Sigmoid colon (tissue), 7 donors: ENCODE measurements at regions of chr3 and their contacts with region 1.

Region 1: DNA sequence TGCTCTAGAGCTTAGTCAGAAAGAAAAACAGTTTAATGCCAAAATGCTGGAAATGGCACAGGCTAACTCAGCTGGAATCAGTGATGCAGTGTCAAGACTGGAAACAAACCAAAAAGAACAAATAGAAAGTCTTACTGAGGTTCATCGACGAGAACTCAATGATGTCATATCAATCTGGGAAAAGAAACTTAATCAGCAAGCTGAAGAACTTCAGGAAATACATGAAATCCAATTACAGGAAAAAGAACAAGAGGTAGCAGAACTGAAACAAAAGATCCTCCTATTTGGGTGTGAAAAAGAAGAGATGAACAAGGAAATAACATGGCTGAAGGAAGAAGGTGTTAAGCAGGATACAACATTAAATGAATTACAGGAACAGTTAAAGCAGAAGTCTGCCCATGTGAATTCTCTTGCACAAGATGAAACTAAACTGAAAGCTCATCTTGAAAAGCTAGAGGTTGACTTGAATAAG is 150.5 kb upstream of the LRRFIP2 start:
- DNase-seq: no peak
- H3K4me3 ChIP-seq: no peak overlapping the region
- H3K27ac ChIP-seq: no peak overlapping the region
- H3K4me1 ChIP-seq: peaks cover 0 to 26% (median 12%) of the 10 kb centered on the region in 4 donors
- H3K27me3 ChIP-seq: no peaks in the 10 kb centered on the region
- CTCF ChIP-seq: no peak
- EP300 ChIP-seq: no peak
- POLR2A ChIP-seq: no peak

Region 2: DNA sequence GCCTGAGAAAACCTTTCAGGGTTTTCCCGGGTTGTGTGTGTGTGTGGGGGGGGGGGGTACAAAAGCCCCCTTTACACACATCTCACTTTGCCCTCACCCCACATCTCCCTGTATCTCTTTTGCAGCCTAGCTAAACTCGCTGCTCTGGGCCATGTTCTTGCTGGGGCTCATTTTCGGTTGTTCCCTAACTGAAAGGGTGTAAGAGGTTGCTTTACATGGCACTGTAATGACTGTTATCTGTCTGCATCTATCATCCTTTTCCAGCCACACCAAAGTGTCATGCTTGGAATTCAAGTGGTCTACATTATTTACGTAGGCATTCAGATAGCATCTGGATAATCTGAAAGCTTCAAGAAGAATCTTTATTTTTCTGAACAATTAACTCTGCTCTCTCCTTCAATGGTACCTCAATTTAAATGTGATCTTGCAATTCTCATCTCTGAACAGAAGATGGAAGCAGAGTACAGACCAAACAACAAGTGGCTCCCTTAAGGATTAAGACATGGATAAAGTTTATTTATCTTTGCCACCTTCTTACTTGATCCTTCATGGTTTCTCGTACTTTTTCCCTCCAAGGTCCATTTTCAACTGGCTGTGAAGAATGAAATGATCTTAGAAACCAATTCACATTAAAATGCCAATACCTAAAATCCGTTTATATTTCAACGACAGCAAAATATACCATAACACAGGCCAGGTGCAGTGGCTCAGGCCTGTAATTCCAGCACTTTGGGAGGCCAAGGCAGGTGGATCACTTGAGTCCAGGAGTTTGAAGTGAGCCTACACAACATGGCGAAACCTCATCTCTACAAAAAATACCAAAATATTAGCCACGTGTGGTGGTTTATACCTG is 595.5 kb before region 1 on chr3:
- intact Hi-C with region 1: no loop called
- DNase-seq: no peak
- H3K4me3 ChIP-seq: no peak overlapping the region
- H3K27ac ChIP-seq: no peak overlapping the region
- H3K4me1 ChIP-seq: no peaks in the 10 kb centered on the region
- H3K27me3 ChIP-seq: no peaks in the 10 kb centered on the region
- CTCF ChIP-seq: peak; percentile 54 to 76 (median 67)
- EP300 ChIP-seq: no peak
- POLR2A ChIP-seq: no peak

Region 3: GRCh38 chr3:37375184-37376127 is 50.6 kb after region 1 on chr3:
- intact Hi-C with region 1: no loop called
- DNase-seq: no peak
- H3K4me3 ChIP-seq: no peak overlapping the region
- H3K27ac ChIP-seq: no peak overlapping the region
- H3K4me1 ChIP-seq: no peaks in the 10 kb centered on the region
- H3K27me3 ChIP-seq: no peaks in the 10 kb centered on the region
- CTCF ChIP-seq: no peak
- EP300 ChIP-seq: no peak
- POLR2A ChIP-seq: no peak

Region 4: DNA sequence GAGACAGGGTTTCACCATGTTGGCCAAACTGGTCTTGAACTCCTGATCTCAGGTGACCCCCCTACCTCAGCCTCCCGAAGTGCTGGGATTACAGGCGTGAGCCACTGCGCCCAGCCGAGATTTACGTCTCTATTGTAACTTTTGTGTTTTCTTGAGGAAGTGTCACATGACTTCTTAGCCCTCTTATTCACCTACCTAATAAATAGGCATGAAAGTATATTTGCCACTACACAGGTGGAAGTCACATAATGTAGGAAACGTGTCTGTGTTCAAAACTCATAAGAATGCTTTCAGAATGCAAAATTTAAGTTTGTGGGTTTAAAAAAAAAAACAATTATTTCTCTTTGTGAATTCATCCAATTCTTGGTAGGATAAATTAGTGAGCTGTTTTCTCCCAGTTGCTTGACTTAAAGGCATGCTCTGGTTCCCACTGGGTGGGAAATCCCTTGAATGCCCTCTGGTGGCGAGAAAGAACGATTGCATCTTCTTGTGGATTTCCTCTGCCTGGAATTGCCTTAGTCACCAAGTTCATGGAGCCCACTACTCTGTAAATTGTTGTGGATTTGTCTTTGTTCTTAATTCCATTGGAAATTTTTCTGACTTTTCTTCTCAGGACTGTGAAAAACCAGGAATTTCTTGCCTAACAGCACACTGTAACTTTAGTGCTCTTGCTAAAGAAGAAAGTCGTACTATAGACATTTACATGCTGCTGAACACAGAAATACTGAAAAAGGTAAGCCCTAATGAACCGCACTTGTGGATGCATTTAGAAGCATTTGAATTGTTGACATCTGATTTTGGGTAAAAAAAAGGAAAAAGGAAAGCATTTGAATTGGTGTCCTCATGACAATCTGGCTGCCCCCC is 454.6 kb after region 1 on chr3:
- intact Hi-C with region 1: loop called (anchors 10 kb)
- DNase-seq: no peak
- H3K4me3 ChIP-seq: no peak overlapping the region
- H3K27ac ChIP-seq: no peak overlapping the region
- H3K4me1 ChIP-seq: peaks cover 0 to 7% (median 6%) of the 10 kb centered on the region in 4 donors
- H3K27me3 ChIP-seq: no peaks in the 10 kb centered on the region
- CTCF ChIP-seq: peak; percentile 60 to 81 (median 75)
- EP300 ChIP-seq: no peak
- POLR2A ChIP-seq: no peak